Activated T-helper 1 cell treated with anti-CD3 and anti-CD28 coated beads, Interleukin-12 subunit alpha, Interleukin-12 subunit beta, Interleukin-2, Interleukin-4 antibody, amounts not matched to agents 30 ng/mL and 10 ng/mL and 1 ng/mL, durations not matched to agents 14 hours and 24 hours and 36 hours (primary cell): ENCODE measurements at regions of chr11 and their contacts with region 1.

Region 1: DNA sequence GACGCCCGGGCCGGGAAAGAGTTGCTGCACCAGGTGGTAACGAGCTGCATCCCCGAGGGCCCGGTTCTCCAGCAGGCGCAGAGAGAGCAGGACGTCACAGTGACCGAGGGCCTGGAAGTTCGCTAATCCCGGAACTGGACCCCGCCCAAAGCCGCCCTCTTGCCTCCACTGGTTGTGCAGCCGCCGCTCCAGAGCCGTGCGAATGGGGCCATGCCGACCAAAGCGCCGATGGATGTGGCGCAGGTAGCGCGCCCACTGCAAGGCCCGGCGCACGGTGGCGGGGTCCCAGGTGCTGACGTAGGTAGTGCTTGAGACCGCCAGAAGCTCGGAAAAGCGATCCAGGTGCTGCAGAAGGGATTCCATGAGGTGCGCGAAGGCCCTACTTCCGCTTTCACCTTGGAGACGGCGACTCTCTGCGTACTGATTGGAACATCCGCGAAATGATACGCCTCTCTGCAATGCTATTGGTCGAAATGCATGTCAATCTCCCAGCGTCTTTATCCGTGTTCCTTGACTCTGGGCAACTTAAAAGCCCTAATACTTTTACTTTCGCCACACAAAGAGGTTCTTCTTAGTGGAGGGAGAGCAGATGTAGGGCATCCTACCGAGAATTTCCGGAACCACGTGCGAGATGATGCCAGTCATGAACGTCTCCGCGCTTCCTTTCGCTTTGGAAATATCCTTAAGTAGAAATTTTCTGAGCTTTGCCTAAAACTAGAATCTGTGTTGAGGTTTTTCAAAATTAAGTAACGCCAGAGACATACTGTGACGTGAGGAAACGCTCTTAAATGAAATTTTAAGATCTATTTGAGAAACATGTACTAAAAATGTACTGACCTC is at the start of gene FANCF:
- DNase-seq: peak; percentile 92
- H3K4me3 Mint-ChIP-seq: peak within 1 kb of the TSS; percentile 99
- H3K27ac Mint-ChIP-seq: peak within 1 kb of the TSS; percentile 98
- H3K4me1 Mint-ChIP-seq: peaks cover 31% of the 10 kb centered on the region
- H3K27me3 Mint-ChIP-seq: no peaks in the 10 kb centered on the region
- total RNA-seq, gene FANCF: 16.9 and 19.9 TPM in 2 replicates

Region 2: DNA sequence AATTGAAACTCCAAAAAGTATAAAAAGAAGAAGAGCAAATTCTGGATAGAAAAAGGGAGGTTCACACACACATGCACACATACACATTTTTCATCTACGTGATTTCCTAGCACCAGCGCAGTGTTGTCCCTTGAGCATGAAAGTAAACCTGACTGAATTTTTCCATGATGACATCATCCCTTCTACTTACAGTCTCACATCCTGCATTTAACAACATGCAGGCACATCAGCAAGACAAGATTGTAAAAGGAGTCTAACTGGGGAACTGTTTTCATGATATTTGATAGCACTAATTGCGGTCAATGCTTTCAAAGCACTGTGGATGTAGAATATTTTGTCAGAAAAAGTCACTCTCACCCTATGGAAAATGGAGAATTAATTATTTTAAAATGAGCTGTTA is 77.4 kb after region 1 on chr11:
- intact Hi-C with region 1: loop called (anchors 1 kb)
- DNase-seq: no peak
- H3K4me3 Mint-ChIP-seq: no peak overlapping the region
- H3K27ac Mint-ChIP-seq: peak overlapping the region; percentile 74
- H3K4me1 Mint-ChIP-seq: peaks cover 33% of the 10 kb centered on the region
- H3K27me3 Mint-ChIP-seq: no peaks in the 10 kb centered on the region

Region 3: GRCh38 chr11:22774716-22775115 is 149.0 kb after region 1 on chr11:
- intact Hi-C with region 1: no loop called
- DNase-seq: no peak
- H3K4me3 Mint-ChIP-seq: no peak overlapping the region
- H3K27ac Mint-ChIP-seq: no peak overlapping the region
- H3K4me1 Mint-ChIP-seq: no peaks in the 10 kb centered on the region
- H3K27me3 Mint-ChIP-seq: no peaks in the 10 kb centered on the region